Common myeloid progenitor, CD34-positive (primary cell): ENCODE measurements at regions of chr18 and their contacts with region 1.

Region 1: GRCh38 chr18:63511286-63511685 is 30.9 kb upstream of the SERPINB12 start:
- DNase-seq: peak; percentile 42 to 54 (median 54)
- H3K4me3 ChIP-seq: no peak overlapping the region
- H3K27ac ChIP-seq: no peak overlapping the region
- H3K4me1 ChIP-seq: peaks cover 0 to 13% (median 0%) of the 10 kb centered on the region in 4 experiments
- H3K27me3 ChIP-seq: no peaks in the 10 kb centered on the region

Region 2: DNA sequence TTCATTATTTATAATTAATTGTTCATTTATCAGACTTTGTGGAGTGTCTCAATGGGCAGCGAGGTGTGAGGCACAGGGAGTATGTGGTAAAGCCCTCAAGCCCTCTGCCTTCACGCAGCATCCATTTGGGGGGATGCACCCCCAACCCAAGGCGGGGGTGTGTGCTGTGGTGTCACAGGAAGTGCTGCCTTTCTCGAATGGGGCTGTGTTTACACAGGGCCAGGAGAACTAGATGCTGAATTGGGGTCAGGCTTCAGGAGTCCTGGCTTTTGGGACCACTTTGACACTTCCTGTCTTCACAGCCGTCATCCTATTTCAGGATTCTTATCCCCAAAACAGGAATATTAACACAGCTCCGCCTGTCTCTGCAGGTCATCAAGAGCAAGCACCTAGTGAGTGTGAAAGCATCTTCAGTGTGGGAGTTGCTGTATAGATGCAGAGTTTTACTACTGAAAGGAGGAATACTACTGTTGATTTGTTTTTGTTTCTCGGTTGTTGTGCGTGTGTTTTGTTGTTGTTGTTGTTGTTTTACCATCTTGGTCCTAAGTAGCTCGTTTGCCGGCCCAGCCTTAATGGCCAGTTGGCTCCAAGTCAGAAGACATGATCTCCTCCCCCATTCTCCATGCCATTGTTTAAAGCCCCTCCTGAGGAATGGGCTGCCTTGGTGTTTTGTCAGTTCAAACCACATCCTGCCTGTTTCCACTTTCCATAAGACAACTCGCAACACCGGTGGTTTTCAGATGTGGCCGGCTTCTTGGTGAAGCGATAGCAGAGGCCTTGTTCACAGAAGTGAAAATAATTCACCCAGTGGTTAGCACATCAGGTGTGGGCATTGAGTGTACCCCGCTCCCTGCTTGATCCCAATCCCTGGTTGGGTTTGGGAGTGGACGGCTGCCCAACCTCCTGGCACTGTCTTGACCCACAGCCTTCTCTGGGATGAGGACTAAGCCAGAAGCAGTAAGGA is 413.0 kb before region 1 on chr18:
- CTCF ChIA-PET with region 1: no interaction called
- POLR2A ChIA-PET with region 1: no interaction called
- DNase-seq: peak; percentile 57 to 94 (median 91)
- H3K4me3 ChIP-seq: peak overlapping the region in 4 of 7 experiments; percentile 9 to 50 (median 30)
- H3K27ac ChIP-seq: peak overlapping the region; percentile 10 to 72
- H3K4me1 ChIP-seq: peaks cover 20 to 59% (median 52%) of the 10 kb centered on the region in 4 experiments
- H3K27me3 ChIP-seq: no peaks in the 10 kb centered on the region

Region 3: DNA sequence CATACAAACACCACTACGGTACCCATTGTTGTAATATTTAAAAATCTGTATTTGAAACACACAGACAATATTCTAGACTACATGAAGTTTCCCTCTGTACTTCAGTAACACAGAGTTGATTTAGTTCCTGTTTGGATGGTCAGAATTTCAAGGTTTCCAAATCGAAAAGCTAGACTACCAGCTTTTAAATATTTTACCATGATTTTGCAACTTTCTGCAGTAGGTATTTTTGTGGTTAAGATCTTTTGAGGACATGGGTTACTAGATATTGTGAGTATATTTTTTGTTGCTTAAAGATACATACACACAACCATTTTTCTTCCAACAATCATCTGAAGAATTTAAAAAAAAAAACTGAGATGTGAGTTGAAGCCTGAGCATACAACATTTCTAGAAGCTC is 23.6 kb before region 1 on chr18:
- CTCF ChIA-PET with region 1: interaction called, 10 read pairs
- POLR2A ChIA-PET with region 1: no interaction called
- DNase-seq: peak in 2 of 3 donors; percentile 26 to 27
- H3K4me3 ChIP-seq: no peak overlapping the region
- H3K27ac ChIP-seq: no peak overlapping the region
- H3K4me1 ChIP-seq: peaks cover 0 to 9% (median 2%) of the 10 kb centered on the region in 4 experiments
- H3K27me3 ChIP-seq: no peaks in the 10 kb centered on the region